ENCODE measurements at regions of chr12 and their contacts with region 1.

Region 1: GRCh38 chr12:44847888-44848702 is 28.0 kb downstream of the NELL2 start:
- DNase-seq: peak; percentile 45 to 89 (median 60)
- ATAC-seq: peak; percentile 87
- H3K4me3 ChIP-seq: peak overlapping the region; percentile 3
- H3K4me3 Mint-ChIP-seq: peak overlapping the region; percentile 74
- H3K27ac ChIP-seq: peak overlapping the region; percentile 75 to 79
- H3K27ac Mint-ChIP-seq: peak overlapping the region; percentile 98
- H3K4me1 ChIP-seq: peaks cover 24% of the 10 kb centered on the region
- H3K4me1 Mint-ChIP-seq: peaks cover 91% of the 10 kb centered on the region
- H3K27me3 ChIP-seq: no peaks in the 10 kb centered on the region
- H3K27me3 Mint-ChIP-seq: no peaks in the 10 kb centered on the region
- CTCF ChIP-seq: no peak

Region 2: GRCh38 chr12:44812062-44812461 is 36.0 kb before region 1 on chr12:
- CTCF ChIA-PET with region 1: interaction called, 7 read pairs
- POLR2A ChIA-PET with region 1: interaction called, 18 read pairs
- intact Hi-C with region 1: loop called in 1 of 2 experiments (anchors 5 kb)
- DNase-seq: peak in 10 of 14 experiments; percentile 14 to 81 (median 38)
- ATAC-seq: peak; percentile 86
- H3K4me3 ChIP-seq: no peak overlapping the region
- H3K4me3 Mint-ChIP-seq: no peak overlapping the region
- H3K27ac ChIP-seq: no peak overlapping the region
- H3K27ac Mint-ChIP-seq: no peak overlapping the region
- H3K4me1 ChIP-seq: peaks cover 7% of the 10 kb centered on the region
- H3K4me1 Mint-ChIP-seq: peaks cover 47% of the 10 kb centered on the region
- H3K27me3 ChIP-seq: no peaks in the 10 kb centered on the region
- H3K27me3 Mint-ChIP-seq: no peaks in the 10 kb centered on the region
- CTCF ChIP-seq: peak; percentile 68

Region 3: DNA sequence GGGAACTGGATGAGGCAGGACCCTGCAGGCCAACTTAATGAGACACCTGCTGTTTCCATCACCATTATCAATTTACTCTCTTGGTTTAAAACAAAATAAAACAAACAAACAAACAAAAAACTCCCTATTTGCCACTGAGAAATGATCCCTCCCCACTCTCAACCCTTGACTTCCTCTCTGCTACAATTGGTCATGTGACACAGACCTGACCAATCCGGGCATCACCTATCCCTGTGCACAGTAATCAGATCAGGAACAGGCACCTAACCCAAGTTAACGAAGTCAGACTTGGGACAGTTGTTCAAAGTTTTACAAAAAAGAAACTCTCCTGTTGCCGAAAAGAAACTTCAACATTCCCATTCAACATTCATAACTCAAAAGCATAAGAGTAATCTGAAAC is 30.4 kb before region 1 on chr12:
- CTCF ChIA-PET with region 1: interaction called, 7 read pairs
- POLR2A ChIA-PET with region 1: interaction called, 18 read pairs
- intact Hi-C with region 1: loop called in 1 of 2 experiments (anchors 5 kb)
- DNase-seq: no peak
- ATAC-seq: no peak
- H3K4me3 ChIP-seq: no peak overlapping the region
- H3K4me3 Mint-ChIP-seq: peak overlapping the region; percentile 21
- H3K27ac ChIP-seq: no peak overlapping the region
- H3K27ac Mint-ChIP-seq: peak overlapping the region; percentile 70
- H3K4me1 ChIP-seq: peaks cover 9% of the 10 kb centered on the region
- H3K4me1 Mint-ChIP-seq: peaks cover 81% of the 10 kb centered on the region
- H3K27me3 ChIP-seq: no peaks in the 10 kb centered on the region
- H3K27me3 Mint-ChIP-seq: no peaks in the 10 kb centered on the region
- CTCF ChIP-seq: no peak

Region 4: DNA sequence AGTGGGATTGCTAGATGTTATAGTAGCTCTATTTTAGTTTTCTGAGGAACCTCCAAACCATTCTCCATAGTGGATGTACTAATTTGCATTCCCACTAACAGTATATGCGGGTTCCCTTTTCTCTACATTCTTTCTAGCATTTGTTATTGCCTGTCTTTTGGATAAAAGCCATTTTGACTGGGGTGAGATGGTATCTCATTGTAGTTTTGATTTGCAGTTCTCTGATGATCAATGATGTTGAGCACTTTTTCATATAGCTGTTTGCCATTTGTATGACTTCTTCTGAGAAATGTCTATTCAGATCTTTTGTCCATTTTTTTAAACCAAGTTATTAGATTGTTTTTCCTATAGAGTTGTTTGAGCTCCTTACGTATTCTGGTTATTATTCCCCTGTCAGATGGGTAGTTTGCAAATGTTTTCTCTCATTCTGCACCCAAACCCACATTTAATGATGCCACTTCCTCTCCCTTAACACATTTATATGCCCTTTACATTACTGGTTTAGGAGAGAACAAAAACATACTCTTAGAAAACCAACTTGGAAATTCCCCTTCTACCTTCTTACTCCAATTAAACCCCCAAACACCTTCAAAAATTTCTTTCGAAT is 20.2 kb before region 1 on chr12:
- CTCF ChIA-PET with region 1: interaction called, 6 read pairs
- POLR2A ChIA-PET with region 1: interaction called, 71 read pairs
- intact Hi-C with region 1: loop called in 1 of 2 experiments (anchors 1 kb)
- DNase-seq: peak in 3 of 14 experiments; percentile 76 to 79 (median 77)
- ATAC-seq: peak; percentile 86
- H3K4me3 ChIP-seq: peak overlapping the region; percentile 17
- H3K4me3 Mint-ChIP-seq: peak overlapping the region; percentile 78
- H3K27ac ChIP-seq: peak overlapping the region; percentile 48 to 59
- H3K27ac Mint-ChIP-seq: peak overlapping the region; percentile 94
- H3K4me1 ChIP-seq: peaks cover 23% of the 10 kb centered on the region
- H3K4me1 Mint-ChIP-seq: peaks cover 67% of the 10 kb centered on the region
- H3K27me3 ChIP-seq: no peaks in the 10 kb centered on the region
- H3K27me3 Mint-ChIP-seq: no peaks in the 10 kb centered on the region
- CTCF ChIP-seq: no peak

Region 5: DNA sequence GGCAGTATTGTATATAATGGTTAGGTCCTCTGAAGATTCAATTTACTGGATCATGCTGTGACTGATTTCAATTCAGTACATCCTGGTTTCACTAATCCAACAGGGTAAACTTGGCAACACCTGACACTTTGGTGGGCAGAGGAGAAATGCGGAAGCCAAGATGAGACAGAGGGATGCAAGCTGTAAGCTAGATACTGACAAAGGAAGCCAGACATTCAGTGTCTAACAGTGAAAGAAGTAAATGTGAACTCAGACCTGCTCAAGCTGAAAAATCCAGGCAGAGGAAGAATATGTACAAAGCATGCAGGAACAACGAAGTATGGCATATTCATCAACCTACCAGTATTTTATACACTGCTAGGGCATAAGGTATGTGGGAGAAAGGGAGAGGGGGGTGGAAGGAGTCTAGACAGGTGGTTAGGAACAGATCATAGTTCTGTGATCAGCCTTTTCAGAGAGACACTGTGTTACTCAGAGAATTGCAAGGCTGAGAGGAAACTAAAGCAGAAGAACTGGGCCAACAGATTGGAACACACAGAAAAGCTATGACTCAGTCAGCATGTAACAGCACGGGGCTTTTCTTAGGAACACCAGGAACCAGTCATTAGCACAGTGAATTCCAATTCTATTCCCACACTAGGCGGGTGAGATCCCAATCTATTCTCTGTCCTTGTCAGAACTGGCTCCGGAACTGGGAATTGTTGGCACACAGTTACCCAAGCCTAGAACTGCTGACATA is 12.3 kb before region 1 on chr12:
- CTCF ChIA-PET with region 1: interaction called, 6 read pairs
- POLR2A ChIA-PET with region 1: interaction called, 71 read pairs
- intact Hi-C with region 1: no loop called
- DNase-seq: peak in 5 of 14 experiments; percentile 16 to 54 (median 43)
- ATAC-seq: peak; percentile 94
- H3K4me3 ChIP-seq: peak overlapping the region; percentile 9
- H3K4me3 Mint-ChIP-seq: peak overlapping the region; percentile 57
- H3K27ac ChIP-seq: peak overlapping the region; percentile 56 to 59
- H3K27ac Mint-ChIP-seq: peak overlapping the region; percentile 91
- H3K4me1 ChIP-seq: peaks cover 37% of the 10 kb centered on the region
- H3K4me1 Mint-ChIP-seq: peaks cover 82% of the 10 kb centered on the region
- H3K27me3 ChIP-seq: no peaks in the 10 kb centered on the region
- H3K27me3 Mint-ChIP-seq: no peaks in the 10 kb centered on the region
- CTCF ChIP-seq: no peak

Region 6: DNA sequence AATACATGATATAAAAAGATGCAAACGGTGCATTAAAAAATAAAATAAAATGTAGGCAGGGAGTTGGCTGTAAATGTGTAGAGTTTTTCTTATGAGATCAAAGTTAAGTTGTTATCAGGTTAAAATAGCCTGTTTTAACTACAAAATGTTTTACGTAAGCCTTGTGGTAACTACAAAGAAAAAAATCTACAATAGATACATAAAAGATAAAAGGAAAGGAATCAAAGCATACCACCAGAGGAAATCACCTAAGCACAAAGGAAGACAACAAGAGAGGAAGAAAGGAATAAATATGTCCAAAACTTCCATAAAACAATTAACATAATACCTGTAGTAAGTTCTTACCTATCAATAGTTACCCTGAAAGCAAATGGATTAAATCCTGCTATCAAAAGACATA is 15.8 kb after region 1 on chr12:
- CTCF ChIA-PET with region 1: no interaction called
- POLR2A ChIA-PET with region 1: interaction called, 53 read pairs
- intact Hi-C with region 1: loop called in 1 of 2 experiments (anchors 1 kb)
- DNase-seq: peak in 3 of 14 experiments; percentile 57 to 78 (median 68)
- ATAC-seq: peak; percentile 82
- H3K4me3 ChIP-seq: no peak overlapping the region
- H3K4me3 Mint-ChIP-seq: peak overlapping the region; percentile 13
- H3K27ac ChIP-seq: no peak overlapping the region
- H3K27ac Mint-ChIP-seq: peak overlapping the region; percentile 64
- H3K4me1 ChIP-seq: peaks cover 7% of the 10 kb centered on the region
- H3K4me1 Mint-ChIP-seq: peaks cover 34% of the 10 kb centered on the region
- H3K27me3 ChIP-seq: no peaks in the 10 kb centered on the region
- H3K27me3 Mint-ChIP-seq: no peaks in the 10 kb centered on the region
- CTCF ChIP-seq: no peak

Region 7: GRCh38 chr12:46483572-46484395 is 1635.7 kb after region 1 on chr12:
- CTCF ChIA-PET with region 1: no interaction called
- POLR2A ChIA-PET with region 1: no interaction called
- intact Hi-C with region 1: no loop called
- DNase-seq: no peak
- ATAC-seq: no peak
- H3K4me3 ChIP-seq: no peak overlapping the region
- H3K4me3 Mint-ChIP-seq: no peak overlapping the region
- H3K27ac ChIP-seq: no peak overlapping the region
- H3K27ac Mint-ChIP-seq: no peak overlapping the region
- H3K4me1 ChIP-seq: no peaks in the 10 kb centered on the region
- H3K4me1 Mint-ChIP-seq: no peaks in the 10 kb centered on the region
- H3K27me3 ChIP-seq: no peaks in the 10 kb centered on the region
- H3K27me3 Mint-ChIP-seq: no peaks in the 10 kb centered on the region
- CTCF ChIP-seq: no peak

Measured in CD4-positive, alpha-beta T cell (primary cell).